ENCODE measurements at regions of chr14 and their contacts with region 1.

Region 1: GRCh38 chr14:23320774-23321571 is at the start of gene PABPN1:
- DNase-seq: peak; percentile 98
- ATAC-seq: peak; percentile 93
- H3K4me3 Mint-ChIP-seq: peak within 1 kb of the TSS; percentile 96
- H3K27ac Mint-ChIP-seq: peak within 1 kb of the TSS; percentile 99
- H3K4me1 Mint-ChIP-seq: peaks cover 26% of the 10 kb centered on the region
- H3K27me3 Mint-ChIP-seq: no peaks in the 10 kb centered on the region
- CTCF ChIP-seq: no peak
- total RNA-seq, gene PABPN1: 290 to 321 TPM (median 295 TPM) in 3 replicates

Region 2: GRCh38 chr14:23101213-23101970 is 219.6 kb before region 1 on chr14:
- CTCF ChIA-PET with region 1: no interaction called
- POLR2A ChIA-PET with region 1: no interaction called
- DNase-seq: no peak
- ATAC-seq: no peak
- H3K4me3 Mint-ChIP-seq: no peak overlapping the region
- H3K27ac Mint-ChIP-seq: no peak overlapping the region
- H3K4me1 Mint-ChIP-seq: peaks cover 60% of the 10 kb centered on the region
- H3K27me3 Mint-ChIP-seq: peaks cover 15% of the 10 kb centered on the region
- CTCF ChIP-seq: no peak

Region 3: DNA sequence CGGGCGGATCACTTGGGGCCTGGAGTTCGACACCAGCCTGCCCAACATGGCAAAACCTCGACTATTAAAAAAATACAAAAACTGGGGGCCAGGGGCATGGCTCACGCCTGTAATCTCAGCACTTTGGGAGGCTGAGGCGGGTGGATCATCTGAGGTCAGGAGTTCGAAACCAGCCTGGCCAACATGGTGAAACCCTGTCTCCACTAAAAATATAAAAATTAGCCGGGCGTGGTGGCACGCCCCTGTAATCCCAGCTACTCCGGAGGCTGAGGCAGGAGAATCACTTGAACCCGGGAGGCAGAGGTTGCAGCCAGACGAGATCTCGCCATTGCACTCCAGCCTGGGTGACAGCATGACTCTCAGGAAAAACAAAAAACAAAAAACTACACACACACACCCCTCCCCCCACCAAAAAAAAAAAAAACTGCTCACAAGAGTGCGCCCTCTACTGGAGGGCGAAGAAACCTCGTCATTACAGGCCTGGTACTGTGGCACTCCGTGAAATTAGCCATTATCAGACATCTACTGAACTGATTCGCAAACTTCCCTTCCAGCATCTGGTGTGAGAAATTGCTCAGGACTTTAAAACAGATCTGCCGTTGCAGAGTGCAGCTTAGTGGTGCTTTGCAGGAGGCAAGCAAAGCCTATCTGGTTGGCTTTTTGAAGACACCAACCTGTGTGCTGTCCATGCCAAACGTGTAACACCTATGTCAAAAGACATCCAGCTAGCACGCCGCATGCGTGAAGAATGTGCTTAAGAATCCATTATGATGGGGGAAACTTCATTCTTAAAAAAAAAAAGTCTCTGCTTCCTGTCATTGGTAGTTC is 26.0 kb before region 1 on chr14:
- CTCF ChIA-PET with region 1: interaction called, 17 read pairs
- POLR2A ChIA-PET with region 1: interaction called, 4 read pairs
- DNase-seq: peak; percentile 28
- ATAC-seq: peak; percentile 55
- H3K4me3 Mint-ChIP-seq: no peak overlapping the region
- H3K27ac Mint-ChIP-seq: no peak overlapping the region
- H3K4me1 Mint-ChIP-seq: peaks cover 20% of the 10 kb centered on the region
- H3K27me3 Mint-ChIP-seq: peaks cover 99% of the 10 kb centered on the region
- CTCF ChIP-seq: peak; percentile 90

Region 4: DNA sequence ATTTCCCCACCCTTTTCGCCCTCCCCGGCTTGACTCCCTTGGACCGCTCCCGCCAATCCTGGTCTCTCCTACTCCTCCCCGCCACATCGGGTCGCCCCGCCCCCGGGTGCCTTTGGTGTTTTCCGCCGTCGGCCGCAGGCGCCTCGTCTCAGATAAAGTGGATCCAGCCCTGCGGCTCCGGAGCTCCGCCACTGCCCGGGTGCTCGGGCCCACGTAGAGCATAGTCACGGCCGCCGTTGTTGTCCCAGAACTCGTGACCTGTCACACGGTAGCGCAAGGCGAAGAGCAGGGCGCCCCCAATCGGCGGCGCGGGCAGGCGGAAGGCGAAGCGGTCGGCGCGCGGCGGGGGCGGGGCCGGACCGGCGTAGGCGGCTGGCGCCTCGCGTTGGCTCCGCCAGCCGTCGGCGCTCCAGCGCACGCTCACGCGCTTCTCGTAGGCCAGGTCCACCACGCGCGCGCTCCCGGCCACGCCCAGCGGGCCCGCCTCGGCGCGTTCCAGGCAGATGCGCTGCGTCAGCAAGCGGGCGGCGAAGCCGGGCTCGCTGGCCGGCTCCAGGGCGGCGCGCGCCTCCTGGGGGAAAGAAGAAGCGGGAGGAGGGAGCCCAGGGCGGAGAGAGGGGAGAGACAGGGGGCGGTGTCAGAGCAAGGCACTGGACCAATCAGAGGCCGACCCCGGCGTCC is 19.5 kb before region 1 on chr14:
- CTCF ChIA-PET with region 1: interaction called, 27 read pairs
- POLR2A ChIA-PET with region 1: interaction called, 32 read pairs
- DNase-seq: peak; percentile 98
- ATAC-seq: peak; percentile 83
- H3K4me3 Mint-ChIP-seq: peak overlapping the region; percentile 85
- H3K27ac Mint-ChIP-seq: peak overlapping the region; percentile 91
- H3K4me1 Mint-ChIP-seq: peaks cover 10% of the 10 kb centered on the region
- H3K27me3 Mint-ChIP-seq: peaks cover 63% of the 10 kb centered on the region
- CTCF ChIP-seq: peak; percentile 60; the same call in 1 of the 2 replicates

Region 5: GRCh38 chr14:23306410-23307145 is 14.4 kb before region 1 on chr14 and contains the start of gene BCL2L2:
- CTCF ChIA-PET with region 1: interaction called, 27 read pairs
- POLR2A ChIA-PET with region 1: interaction called, 32 read pairs
- DNase-seq: peak; percentile 94
- ATAC-seq: peak; percentile 69
- H3K4me3 Mint-ChIP-seq: peak within 1 kb of the TSS; percentile 87
- H3K27ac Mint-ChIP-seq: peak within 1 kb of the TSS; percentile 93
- H3K4me1 Mint-ChIP-seq: peaks cover 20% of the 10 kb centered on the region
- H3K27me3 Mint-ChIP-seq: peaks cover 18% of the 10 kb centered on the region
- CTCF ChIP-seq: no peak
- total RNA-seq, gene BCL2L2: 15.5 to 18.2 TPM (median 16.9 TPM) in 3 replicates

Region 6: GRCh38 chr14:23352511-23353432 is 31.8 kb after region 1 on chr14 and contains the start of gene SLC22A17:
- CTCF ChIA-PET with region 1: interaction called, 14 read pairs
- POLR2A ChIA-PET with region 1: interaction called, 17 read pairs
- DNase-seq: peak; percentile 84
- ATAC-seq: peak; percentile 90
- H3K4me3 Mint-ChIP-seq: peak within 1 kb of the TSS; percentile 63
- H3K27ac Mint-ChIP-seq: peak within 1 kb of the TSS; percentile 67
- H3K4me1 Mint-ChIP-seq: peaks cover 11% of the 10 kb centered on the region
- H3K27me3 Mint-ChIP-seq: peaks cover 43% of the 10 kb centered on the region
- CTCF ChIP-seq: no peak
- total RNA-seq, gene SLC22A17: 42.3 to 52.4 TPM (median 51.4 TPM) in 3 replicates

Region 7: DNA sequence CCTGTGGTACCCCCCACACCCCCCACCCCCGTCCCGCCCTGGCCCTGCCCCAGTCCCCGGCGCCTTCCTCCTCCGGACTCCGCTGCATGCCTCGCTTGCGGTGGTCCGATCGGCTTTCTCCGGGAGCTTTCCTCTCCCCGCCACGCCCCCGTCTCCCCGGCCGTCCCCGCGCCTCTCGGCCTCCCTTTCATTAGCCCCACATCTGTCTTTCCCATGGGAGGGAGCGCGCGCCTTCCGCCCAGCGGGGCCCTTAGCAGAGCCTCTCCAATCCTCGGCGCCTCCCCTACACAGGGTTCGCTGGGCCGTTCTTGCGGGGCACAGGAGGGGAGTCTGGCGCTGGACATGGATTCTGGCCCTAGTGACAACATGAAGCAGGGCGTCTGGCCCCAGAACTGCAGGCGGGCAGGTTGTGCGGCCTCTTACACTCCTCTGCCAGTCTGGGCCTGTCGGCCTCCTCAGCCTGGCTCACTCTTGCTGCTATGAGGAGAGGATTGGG is 45.5 kb after region 1 on chr14:
- CTCF ChIA-PET with region 1: interaction called, 21 read pairs
- POLR2A ChIA-PET with region 1: interaction called, 12 read pairs
- DNase-seq: peak; percentile 93
- ATAC-seq: peak; percentile 63
- H3K4me3 Mint-ChIP-seq: peak overlapping the region; percentile 71
- H3K27ac Mint-ChIP-seq: peak overlapping the region; percentile 75
- H3K4me1 Mint-ChIP-seq: peaks cover 27% of the 10 kb centered on the region
- H3K27me3 Mint-ChIP-seq: peaks cover 51% of the 10 kb centered on the region
- CTCF ChIP-seq: no peak

Region 8: GRCh38 chr14:23539248-23540140 is 218.5 kb after region 1 on chr14:
- CTCF ChIA-PET with region 1: no interaction called
- POLR2A ChIA-PET with region 1: interaction called, 13 read pairs
- DNase-seq: peak; percentile 77
- ATAC-seq: peak; percentile 22
- H3K4me3 Mint-ChIP-seq: peak overlapping the region; percentile 83
- H3K27ac Mint-ChIP-seq: peak overlapping the region; percentile 100
- H3K4me1 Mint-ChIP-seq: peaks cover 57% of the 10 kb centered on the region
- H3K27me3 Mint-ChIP-seq: no peaks in the 10 kb centered on the region
- CTCF ChIP-seq: peak; percentile 83

Measured in WTC11 (cell line).